Activated T-helper 2 cell treated with anti-CD3 and anti-CD28 coated beads, Interferon-gamma antibody, Interleukin-2, Interleukin-4, amounts not matched to agents 10 μg/mL and 5 μg/mL and 100 μg/mL, durations not matched to agents 14 hours and 24 hours and 36 hours (primary cell): ENCODE measurements at regions of chr2 and their contacts with region 1.

Region 1: GRCh38 chr2:172710584-172711024 is 25.0 kb upstream of the RAPGEF4 start:
- DNase-seq: no peak
- H3K4me3 Mint-ChIP-seq: no peak overlapping the region
- H3K27ac Mint-ChIP-seq: no peak overlapping the region
- H3K4me1 Mint-ChIP-seq: peaks cover 1% of the 10 kb centered on the region
- H3K27me3 Mint-ChIP-seq: peaks cover 24% of the 10 kb centered on the region

Region 2: GRCh38 chr2:172172513-172173173 is 538.0 kb before region 1 on chr2:
- intact Hi-C with region 1: loop called (anchors 5 kb)
- DNase-seq: peak; percentile 11
- H3K4me3 Mint-ChIP-seq: peak overlapping the region; percentile 38
- H3K27ac Mint-ChIP-seq: no peak overlapping the region
- H3K4me1 Mint-ChIP-seq: peaks cover 1% of the 10 kb centered on the region
- H3K27me3 Mint-ChIP-seq: peaks cover 33% of the 10 kb centered on the region

Region 3: DNA sequence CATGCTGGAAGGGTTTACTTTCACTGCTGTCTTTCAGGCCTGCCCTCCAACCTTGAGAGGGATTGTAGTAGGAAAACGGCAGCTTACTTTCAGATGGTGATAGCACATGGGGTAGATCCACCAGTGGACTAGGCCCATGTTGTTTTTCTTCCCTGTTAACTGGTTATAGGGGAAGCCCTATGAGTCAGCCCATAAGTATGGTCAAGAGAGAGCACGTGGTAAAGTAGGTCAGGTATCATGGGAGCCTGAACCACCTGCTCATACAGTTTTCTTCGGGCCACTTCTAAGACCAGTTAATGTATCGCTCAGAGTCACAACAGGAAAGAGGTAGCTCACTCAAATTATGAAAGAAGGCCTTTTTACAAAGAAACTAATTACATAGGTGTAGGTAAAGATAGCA is 121.7 kb before region 1 on chr2:
- intact Hi-C with region 1: loop called (anchors 2 kb)
- DNase-seq: no peak
- H3K4me3 Mint-ChIP-seq: no peak overlapping the region
- H3K27ac Mint-ChIP-seq: no peak overlapping the region
- H3K4me1 Mint-ChIP-seq: peaks cover 22% of the 10 kb centered on the region
- H3K27me3 Mint-ChIP-seq: no peaks in the 10 kb centered on the region